ENCODE measurements at regions of chr5 and their contacts with region 1.

Region 1: GRCh38 chr5:35926389-35927051 is 11.9 kb downstream of the CAPSL start:
- DNase-seq: no peak
- ATAC-seq: peak; percentile 63

Region 2: DNA sequence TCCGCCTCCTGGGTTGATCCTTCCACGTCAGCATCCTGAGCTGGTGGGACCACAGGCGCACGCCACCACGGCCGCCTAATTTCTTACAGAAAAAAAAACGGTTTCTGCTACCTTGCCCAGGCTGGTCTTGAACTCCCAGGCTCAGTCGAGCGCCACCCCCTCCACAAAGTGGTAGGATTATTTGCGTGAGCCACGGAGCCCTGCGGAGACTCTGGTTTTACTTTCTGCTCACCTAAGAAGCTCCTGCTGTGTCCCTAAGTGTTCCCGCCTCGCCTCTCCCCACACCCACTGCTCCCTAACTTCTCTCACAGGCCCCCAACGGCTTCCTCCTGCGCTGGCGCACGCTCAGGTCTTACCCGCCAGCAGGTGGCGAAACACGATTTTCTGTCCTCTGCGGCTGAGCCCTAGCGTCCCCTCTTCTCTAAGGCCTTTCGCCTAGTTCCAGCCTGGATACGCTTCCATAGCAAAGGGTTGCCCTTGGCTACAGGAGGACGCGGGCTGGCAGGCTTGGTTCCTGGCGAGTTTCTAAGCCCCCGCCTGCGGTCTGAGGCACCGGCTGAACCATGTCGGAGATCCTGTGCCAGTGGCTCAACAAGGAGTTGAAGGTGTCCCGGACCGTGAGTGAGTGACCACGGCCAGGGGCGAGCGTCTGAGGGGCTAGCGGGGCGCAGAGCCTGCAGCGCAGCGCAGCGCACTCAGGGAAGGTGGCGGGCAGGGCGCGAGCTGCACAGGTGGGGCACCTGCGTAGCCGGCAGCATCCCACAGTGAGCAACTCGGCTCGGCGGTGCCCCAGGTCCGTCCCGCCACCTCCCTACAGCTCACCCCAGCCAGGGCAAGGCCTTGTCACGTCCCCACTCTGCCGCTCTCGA is 308.9 kb before region 1 on chr5 and contains the start of gene SPEF2:
- intact Hi-C with region 1: loop called (anchors 10 kb)
- DNase-seq: peak; percentile 86
- ATAC-seq: peak; percentile 100
- total RNA-seq, gene SPEF2: 2.7 TPM

Region 3: DNA sequence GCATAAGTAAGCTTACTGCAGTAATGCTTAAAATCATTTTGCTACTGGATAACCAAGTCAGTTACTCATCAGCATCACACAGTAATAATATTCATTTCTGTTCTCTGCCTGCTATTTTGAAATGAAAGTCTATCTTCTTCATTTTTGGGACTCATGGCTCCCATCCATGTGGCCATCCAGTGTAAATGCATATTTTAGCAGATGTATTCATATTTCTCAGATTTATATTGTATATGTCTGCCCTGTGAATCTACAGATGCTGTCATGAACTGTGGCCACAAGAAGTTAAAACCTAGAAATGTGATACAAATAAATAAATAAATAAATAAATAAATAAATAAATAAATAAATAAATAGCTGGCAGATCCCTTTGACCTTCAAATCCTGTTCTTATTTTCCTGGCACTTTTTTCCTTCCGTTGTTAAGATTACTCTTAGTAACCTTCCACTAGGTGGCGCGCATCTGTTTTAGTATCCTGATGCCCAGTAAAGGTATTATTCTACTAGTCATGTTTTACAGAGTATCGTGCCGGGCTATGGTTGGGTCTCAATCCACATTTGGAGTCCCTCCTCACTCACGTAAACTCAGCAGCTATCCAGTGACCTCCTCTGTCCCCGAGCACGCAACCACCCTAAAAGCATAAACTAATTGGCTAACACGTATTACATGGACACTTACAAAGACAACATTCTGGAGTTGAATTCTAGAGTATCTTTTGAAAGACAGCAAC is 149.0 kb before region 1 on chr5:
- intact Hi-C with region 1: loop called (anchors 5 kb)
- DNase-seq: peak; percentile 40
- ATAC-seq: no peak

Region 4: DNA sequence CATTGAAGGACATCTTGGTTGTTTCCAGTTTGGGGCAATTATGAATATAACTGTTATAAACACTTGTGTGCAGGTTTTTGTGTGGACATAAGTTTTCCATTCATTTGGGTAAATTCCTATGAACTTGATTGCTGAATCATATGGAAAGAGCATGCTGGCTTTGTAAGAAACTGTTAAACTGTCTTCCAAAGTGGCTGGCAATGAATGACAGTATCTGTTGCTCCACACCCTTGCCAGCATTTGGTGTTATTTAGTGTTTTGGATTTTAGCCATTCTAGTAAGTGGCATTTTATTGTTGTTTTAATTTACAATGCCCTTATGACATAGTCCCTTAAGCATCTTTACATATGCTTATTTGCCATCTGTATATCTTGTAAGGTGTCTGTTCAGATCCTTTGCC is 170.0 kb after region 1 on chr5:
- intact Hi-C with region 1: no loop called
- DNase-seq: no peak
- ATAC-seq: no peak

Measured in left ventricle myocardium superior (tissue), 1 donor.